ENCODE measurements at regions of chr2 and their contacts with region 1.

Region 1: DNA sequence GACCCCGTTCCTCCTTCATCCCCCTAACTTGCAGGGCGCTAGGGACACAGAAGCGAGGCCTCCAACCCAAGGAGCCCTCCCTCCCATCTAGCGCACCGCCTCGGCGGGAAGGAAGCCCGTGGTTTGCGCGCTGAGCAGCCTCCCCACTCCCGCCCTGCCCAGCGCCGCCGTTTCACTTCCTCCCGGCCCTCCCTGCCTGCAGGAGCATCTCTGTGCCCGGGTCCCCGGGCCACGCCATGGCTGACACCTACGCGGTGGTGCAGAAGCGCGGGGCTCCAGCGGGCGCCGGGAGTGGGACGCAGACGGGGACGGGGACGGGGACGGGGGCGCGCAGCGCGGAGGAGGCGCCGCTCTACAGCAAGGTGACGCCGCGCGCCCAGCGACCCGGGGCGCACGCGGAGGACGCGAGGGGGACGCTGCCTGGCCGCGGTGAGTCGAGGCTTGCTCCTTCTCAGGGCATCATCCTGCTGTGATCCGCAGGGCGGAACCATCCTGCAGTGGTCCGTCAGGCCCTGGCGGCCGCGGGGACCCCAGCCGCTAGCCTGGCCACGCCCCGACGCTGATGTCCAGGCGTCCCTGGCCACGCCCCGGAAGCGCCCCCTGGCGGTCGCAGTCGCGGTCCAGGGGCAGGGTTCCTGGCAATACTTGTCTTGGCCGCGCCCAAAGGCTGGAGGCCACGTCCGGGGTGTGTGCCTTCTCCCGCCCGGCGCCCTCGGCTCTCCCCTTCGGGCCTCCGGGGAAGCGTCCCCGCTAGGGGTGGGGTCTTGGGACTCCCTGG is 16.4 kb downstream of the PTPN18 start:
- DNase-seq: peak; percentile 96
- ATAC-seq: peak; percentile 96

Region 2: DNA sequence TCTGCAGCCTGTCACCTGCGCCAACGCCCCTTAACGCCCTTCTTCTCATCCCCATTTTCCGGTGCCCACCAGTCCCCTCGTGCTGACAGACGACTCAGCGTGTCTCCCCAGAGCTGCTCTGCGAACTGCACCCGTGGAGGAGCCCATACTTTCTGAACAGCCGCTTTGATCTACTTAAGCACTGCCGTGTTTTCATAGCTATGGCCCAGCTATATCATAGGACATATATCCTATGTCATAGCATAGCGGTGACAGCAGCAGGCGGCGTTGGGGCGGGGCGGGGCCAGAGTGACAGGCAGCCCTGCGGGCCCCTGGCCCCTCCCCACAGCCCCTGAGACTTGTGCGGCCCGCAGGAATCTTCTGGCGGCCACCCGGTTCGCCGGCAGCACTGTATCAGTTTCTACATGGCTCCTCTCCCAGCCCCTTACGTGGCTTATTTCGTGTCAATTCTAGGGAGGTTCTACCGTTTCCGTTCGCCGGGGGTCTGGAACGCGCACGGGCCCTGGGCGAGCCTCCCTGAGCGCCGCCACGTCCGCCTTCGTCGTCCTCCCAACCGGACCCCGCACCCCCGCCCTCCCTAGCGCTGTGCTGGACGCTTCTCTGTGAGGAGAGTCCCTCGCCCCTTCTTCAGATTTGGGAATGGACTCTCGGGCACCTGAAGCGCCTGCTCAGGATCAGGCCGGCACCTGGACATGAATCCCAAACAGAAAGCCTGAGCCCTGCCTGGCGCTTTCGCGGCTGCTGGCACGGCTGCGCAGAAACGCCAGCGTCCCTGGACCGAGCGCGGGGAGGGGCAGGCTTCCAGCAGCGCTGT is 19.0 kb after region 1 on chr2:
- intact Hi-C with region 1: loop called (anchors 1 kb)
- DNase-seq: peak; percentile 95
- ATAC-seq: peak; percentile 90